ENCODE measurements at regions of chr3 and their contacts with region 1.

Region 1: DNA sequence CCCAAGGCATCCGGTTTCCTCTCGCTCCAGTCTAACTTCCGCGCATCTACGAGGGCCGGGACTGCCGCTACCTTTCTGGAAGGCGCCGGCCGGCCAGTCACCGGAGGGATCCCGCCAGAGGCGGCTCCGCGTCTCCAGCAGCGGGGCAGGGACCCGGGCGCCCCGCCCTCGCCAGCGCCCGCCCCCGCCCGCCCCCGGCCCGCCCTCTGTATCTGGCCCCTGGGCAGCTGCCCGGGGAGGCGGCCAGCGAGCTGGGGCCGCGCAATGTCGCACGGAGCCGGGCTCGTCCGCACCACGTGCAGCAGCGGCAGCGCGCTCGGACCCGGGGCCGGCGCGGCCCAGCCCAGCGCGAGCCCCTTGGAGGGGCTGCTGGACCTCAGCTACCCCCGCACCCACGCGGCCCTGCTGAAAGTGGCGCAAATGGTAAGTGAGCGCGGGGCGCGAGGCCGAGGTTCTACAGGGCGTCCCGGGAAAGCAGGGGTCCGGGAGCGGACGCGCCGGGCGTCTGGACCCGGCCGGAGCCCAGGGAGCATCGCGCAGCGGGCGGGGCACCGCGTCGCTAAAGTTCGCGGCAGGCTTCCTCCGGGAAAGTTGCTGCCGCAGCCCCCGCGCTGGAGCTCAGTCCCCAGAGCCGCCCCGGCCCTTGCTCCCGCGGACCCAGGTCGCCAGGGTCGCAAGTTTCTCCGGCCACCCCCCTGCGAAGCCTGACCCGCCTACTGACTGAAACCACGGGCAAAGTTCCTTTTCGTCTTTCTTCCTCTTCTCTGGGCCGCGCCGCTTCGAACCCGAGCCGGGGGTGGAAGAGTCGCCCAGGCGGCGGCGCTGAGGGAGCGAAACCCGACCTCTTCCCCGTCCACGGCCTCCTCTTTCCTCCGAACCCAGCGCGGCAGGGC is at the start of gene CMTM7:
- DNase-seq: peak; percentile 46 to 56 (median 48)
- H3K4me3 ChIP-seq: peak within 1 kb of the TSS; percentile 77 to 93 (median 90)
- H3K4me3 Mint-ChIP-seq: peak within 1 kb of the TSS; percentile 96 to 97
- H3K27ac ChIP-seq: peak within 1 kb of the TSS; percentile 86 to 94
- H3K27ac Mint-ChIP-seq: peak within 1 kb of the TSS; percentile 91 to 96 (median 95)
- H3K4me1 ChIP-seq: peaks cover 41 to 48% of the 10 kb centered on the region in 2 donors
- H3K4me1 Mint-ChIP-seq: peaks cover 53% of the 10 kb centered on the region
- H3K27me3 ChIP-seq: no peaks in the 10 kb centered on the region
- H3K27me3 Mint-ChIP-seq: peaks cover 0 to 2% (median 0%) of the 10 kb centered on the region in 3 donors
- CTCF ChIP-seq: no peak
- polyA plus RNA-seq, gene CMTM7: 100 to 148 (median 146) TPM

Region 2: DNA sequence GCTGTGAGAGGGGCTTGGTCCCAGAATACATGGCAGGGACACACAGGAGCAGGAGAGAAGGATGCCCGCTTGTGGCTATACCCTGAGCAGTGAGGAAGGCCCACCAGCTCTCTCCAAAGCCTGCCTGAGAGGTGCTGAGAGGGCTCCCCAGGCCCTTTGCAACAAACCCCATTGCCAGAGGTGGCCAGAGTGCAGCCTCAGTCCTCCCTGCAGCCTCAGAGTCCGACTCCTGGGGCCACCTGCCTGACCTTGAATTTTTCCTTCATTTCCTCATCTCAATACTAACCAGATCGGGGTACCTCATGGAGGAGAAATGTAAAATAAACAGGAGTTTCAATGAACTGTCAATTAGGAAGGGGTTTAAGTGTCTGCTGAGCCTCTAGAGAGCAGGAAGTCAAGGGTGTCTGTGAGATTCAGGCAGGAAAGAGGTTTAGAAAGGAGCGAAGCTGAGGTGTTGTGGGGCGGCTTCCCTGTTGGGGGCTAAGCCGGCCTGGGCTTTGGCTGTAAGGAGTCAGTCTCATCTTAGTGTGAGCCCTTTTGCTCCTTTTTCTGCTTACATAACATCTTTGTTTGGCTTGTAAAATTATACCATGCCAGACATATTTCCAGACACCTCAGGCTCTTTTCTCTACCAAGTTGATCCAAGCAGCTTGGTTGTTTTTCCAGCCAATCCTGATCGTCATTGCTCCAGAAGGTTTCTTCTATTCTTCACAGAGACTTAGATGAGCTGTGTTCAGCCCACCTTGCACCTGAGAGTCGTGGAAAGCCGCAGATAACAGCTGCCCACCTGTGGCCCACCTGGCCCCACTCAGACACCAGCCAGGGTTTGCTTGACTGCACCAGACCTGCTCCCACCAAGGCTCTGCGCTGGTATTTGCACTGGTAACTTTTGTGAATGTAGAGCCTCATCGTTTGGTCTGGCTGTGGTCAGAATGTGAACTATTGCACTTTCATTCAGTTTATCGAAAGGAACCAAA is 36.5 kb after region 1 on chr3:
- intact Hi-C with region 1: loop called (anchors 5 kb)
- DNase-seq: no peak
- H3K4me3 ChIP-seq: no peak overlapping the region
- H3K4me3 Mint-ChIP-seq: no peak overlapping the region
- H3K27ac ChIP-seq: peak overlapping the region; percentile 20 to 57
- H3K27ac Mint-ChIP-seq: peak overlapping the region; percentile 47 to 87 (median 66)
- H3K4me1 ChIP-seq: peaks cover 65 to 68% of the 10 kb centered on the region in 2 donors
- H3K4me1 Mint-ChIP-seq: peaks cover 77% of the 10 kb centered on the region
- H3K27me3 ChIP-seq: no peaks in the 10 kb centered on the region
- H3K27me3 Mint-ChIP-seq: no peaks in the 10 kb centered on the region
- CTCF ChIP-seq: no peak

Region 3: GRCh38 chr3:32544894-32545293 is 153.0 kb after region 1 on chr3:
- intact Hi-C with region 1: no loop called
- DNase-seq: no peak
- H3K4me3 ChIP-seq: no peak overlapping the region
- H3K4me3 Mint-ChIP-seq: no peak overlapping the region
- H3K27ac ChIP-seq: peak overlapping the region in 1 of 2 donors; percentile 46
- H3K27ac Mint-ChIP-seq: peak overlapping the region in 5 of 7 donors; percentile 31 to 75 (median 63)
- H3K4me1 ChIP-seq: no peaks in the 10 kb centered on the region
- H3K4me1 Mint-ChIP-seq: peaks cover 6% of the 10 kb centered on the region
- H3K27me3 ChIP-seq: no peaks in the 10 kb centered on the region
- H3K27me3 Mint-ChIP-seq: no peaks in the 10 kb centered on the region
- CTCF ChIP-seq: no peak

Region 4: GRCh38 chr3:33096093-33096868 is 704.4 kb after region 1 on chr3:
- intact Hi-C with region 1: no loop called
- DNase-seq: peak; percentile 51 to 72 (median 63)
- H3K4me3 ChIP-seq: peak overlapping the region; percentile 77 to 98 (median 85)
- H3K4me3 Mint-ChIP-seq: peak overlapping the region; percentile 99
- H3K27ac ChIP-seq: peak overlapping the region; percentile 79 to 97
- H3K27ac Mint-ChIP-seq: peak overlapping the region; percentile 93 to 97 (median 96)
- H3K4me1 ChIP-seq: peaks cover 17 to 24% of the 10 kb centered on the region in 2 donors
- H3K4me1 Mint-ChIP-seq: peaks cover 35% of the 10 kb centered on the region
- H3K27me3 ChIP-seq: no peaks in the 10 kb centered on the region
- H3K27me3 Mint-ChIP-seq: peaks cover 0 to 7% (median 2%) of the 10 kb centered on the region in 3 donors
- CTCF ChIP-seq: no peak